Uterus (tissue), 4 donors: ENCODE measurements at regions of chr1 and their contacts with region 1.

Region 1: DNA sequence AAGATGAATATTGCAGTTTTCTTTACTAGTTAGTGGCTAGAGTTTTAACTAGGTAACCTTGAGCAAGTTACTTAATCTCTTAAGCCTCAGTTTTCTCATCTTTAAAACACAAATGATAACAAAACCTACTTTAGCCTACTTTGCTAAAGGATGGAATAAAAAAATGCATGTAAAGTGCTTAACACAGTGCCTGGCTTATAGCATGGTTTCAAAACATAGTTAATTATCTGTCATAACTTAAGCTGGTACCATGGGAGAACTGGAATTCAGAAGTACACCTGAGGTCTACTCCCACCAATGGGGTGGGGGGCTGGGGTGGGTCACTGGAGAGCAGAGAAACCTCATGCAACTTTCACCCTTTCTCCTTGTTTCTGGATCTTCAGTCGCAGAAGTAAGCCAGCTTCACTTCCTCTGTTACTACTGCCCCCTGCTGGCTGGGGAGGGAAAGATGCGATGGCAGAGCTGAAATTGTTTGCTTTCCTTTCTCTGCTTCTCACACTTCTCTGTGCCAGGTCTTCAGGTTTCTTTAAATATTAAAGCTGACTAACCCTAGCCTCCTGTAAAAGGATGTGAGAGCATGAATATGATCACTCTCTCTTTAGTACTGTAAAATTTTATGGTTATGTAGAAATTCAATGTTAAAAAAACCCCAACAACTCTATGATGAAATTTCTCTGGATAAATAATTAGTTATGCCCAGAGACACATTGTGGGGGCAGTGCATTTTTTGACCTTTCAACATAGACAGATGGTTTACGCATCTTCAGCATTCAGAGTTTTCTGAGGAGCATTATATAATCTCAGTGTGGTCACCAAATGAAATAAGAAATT is 324.2 kb downstream of the HLX start:
- DNase-seq: peak; percentile 63 to 66
- H3K4me3 ChIP-seq: no peak overlapping the region
- H3K27ac ChIP-seq: no peak overlapping the region
- H3K4me1 ChIP-seq: no peaks in the 10 kb centered on the region
- H3K27me3 ChIP-seq: no peaks in the 10 kb centered on the region
- CTCF ChIP-seq: peak; percentile 60 to 69 (median 64)
- POLR2A ChIP-seq: no peak

Region 2: GRCh38 chr1:220879076-220879508 is 324.3 kb before region 1 on chr1 and contains the start of gene HLX:
- intact Hi-C with region 1: loop called (anchors 10 kb)
- DNase-seq: peak; percentile 84 to 86
- H3K4me3 ChIP-seq: peak within 1 kb of the TSS; percentile 39 to 84
- H3K27ac ChIP-seq: peak within 1 kb of the TSS; percentile 89 to 92
- H3K4me1 ChIP-seq: peaks cover 0 to 9% of the 10 kb centered on the region in 2 donors
- H3K27me3 ChIP-seq: peaks cover 0 to 14% of the 10 kb centered on the region in 2 donors
- CTCF ChIP-seq: peak in 1 of 4 experiments; percentile 3
- POLR2A ChIP-seq: peak; percentile 49 to 60
- total RNA-seq, gene HLX: 0.26 to 35.9 (median 7.0) TPM